MCF 10A (cell line): ENCODE measurements at regions of chr3 and their contacts with region 1.

Region 1: DNA sequence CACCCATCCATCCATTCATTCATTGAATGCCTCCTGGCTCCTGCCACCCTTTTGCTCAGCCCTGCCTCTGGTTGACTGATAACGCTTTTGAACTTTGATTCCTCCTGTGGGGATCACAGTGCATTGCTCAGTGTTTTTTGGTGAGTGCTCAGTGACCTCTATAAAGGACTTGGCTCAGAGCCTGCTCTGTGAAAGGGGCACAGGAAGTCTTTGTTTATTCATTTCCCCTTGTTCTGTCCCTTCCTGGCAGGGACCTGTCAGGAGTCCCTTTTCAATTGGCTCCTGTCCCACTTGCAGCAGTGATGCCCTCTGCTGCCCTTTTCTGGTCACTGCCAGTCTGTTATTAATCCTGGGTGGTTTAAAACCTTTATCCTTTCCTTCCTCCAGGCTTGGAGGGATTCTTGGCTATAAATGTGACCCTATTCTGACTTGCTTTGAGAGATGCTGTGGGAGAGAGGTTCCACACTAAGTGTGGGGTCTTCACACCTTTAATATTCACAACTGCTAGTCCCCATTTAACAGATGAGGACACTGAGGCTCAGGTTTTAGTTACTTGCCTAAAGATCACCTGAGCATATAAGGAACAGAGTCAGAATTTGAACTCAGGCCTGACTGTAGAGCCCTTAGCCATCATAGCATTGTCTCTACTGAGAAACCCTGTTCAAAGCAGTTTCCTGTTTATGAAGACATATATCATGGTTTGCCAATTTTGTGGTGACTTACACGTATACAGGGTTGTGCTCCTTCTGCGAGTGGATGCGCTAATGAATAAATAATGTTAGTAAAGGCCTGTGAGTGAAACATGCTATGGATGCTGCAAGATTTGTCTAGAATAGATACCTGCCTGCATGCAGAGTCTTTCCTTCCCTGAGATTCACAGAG is 23.2 kb upstream of the TATDN2 start:
- DNase-seq: peak; percentile 88
- H3K4me3 Mint-ChIP-seq: no peak overlapping the region
- H3K27ac Mint-ChIP-seq: no peak overlapping the region
- H3K4me1 Mint-ChIP-seq: peaks cover 21% of the 10 kb centered on the region
- H3K27me3 Mint-ChIP-seq: no peaks in the 10 kb centered on the region
- CTCF ChIP-seq: peak; percentile 78

Region 2: DNA sequence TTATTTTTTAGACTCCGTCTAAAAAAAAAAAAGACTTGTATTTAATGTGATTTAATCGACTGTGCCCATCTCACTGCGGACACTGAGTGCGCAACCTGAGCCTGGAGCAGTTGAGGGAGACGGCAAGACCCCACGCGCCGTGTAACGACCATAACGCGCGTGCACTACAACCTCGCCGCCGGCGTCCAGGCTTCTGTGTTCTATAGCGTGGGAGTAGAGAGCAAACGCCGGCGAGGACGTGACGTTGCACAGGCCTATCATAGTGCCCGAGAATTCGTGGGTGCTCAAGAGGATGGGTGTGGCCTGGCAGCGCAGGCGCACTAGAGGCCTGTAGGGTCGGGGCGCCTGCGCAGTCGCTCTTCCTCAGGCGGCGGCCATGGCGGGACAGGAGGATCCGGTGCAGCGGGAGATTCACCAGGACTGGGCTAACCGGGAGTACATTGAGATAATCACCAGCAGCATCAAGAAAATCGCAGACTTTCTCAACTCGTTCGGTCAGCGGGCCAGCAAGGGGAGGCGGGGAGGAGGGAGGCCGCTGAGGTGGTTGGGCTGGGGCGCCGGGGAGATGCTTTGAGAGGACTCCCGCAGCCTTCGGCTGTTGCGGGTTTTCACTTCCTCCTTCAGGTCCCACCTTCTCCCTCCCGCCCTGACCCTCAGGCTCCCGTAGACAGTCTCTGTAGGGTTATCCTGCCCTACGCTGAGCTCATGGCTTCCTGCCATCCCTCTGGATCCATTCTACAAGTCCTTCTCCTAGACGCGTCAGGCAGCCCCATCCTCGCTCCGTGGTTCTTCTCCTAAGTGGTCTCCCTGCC is 109.5 kb before region 1 on chr3 and contains the start of gene BRK1:
- CTCF ChIA-PET with region 1: no interaction called
- POLR2A ChIA-PET with region 1: interaction called, 4 read pairs
- intact Hi-C with region 1: loop called (anchors 1 kb)
- DNase-seq: peak; percentile 97
- H3K4me3 Mint-ChIP-seq: peak within 1 kb of the TSS; percentile 94
- H3K27ac Mint-ChIP-seq: peak within 1 kb of the TSS; percentile 94
- H3K4me1 Mint-ChIP-seq: peaks cover 7% of the 10 kb centered on the region
- H3K27me3 Mint-ChIP-seq: no peaks in the 10 kb centered on the region
- CTCF ChIP-seq: no peak
- total RNA-seq, gene BRK1: 78.5 and 82.5 TPM in 2 replicates

Region 3: GRCh38 chr3:10142707-10143566 is 82.1 kb before region 1 on chr3:
- CTCF ChIA-PET with region 1: interaction called, 3 read pairs
- POLR2A ChIA-PET with region 1: interaction called, 4 read pairs
- intact Hi-C with region 1: loop called (anchors 2 kb)
- DNase-seq: peak; percentile 38
- H3K4me3 Mint-ChIP-seq: peak overlapping the region; percentile 86
- H3K27ac Mint-ChIP-seq: peak overlapping the region; percentile 92
- H3K4me1 Mint-ChIP-seq: peaks cover 6% of the 10 kb centered on the region
- H3K27me3 Mint-ChIP-seq: no peaks in the 10 kb centered on the region
- CTCF ChIP-seq: no peak

Region 4: DNA sequence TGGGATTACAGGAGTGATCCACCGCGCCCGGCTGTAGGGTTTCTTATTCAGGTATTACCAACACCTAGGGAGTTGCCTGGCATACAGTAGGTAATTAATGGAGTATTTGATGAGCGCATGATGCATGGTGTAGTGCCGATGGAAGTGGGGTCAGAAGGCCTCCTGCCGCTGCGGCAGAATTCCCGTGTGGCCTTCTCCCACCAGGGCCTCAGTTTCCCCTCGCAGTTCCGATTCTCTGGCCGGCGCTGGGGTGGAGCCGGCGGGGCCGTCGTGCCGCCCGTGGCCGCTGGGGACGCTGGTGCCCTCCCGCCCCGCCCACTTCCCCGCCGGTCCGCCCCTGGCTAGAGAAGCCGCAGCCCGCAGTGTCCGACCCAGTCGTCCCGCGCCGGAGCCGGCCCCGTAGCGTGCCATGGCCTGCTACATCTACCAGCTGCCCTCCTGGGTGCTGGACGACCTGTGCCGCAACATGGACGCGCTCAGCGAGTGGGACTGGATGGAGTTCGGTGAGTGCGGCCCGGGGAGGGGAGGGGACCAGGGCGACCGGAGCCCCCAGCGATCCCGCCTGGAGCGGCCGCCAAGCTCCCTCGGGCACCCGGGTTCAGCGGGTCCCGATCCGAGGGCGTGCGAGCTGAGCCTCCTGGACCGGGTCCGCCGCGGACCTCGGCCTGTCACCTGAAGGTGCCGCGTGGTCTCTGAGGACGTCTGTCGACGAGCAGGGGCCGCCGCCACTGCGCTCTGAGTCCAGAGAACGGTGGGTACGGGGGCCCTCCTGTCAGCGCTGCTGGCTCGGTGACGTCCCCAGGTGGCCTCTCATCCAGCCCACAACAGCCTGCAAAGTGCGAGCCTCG is 60.3 kb before region 1 on chr3 and contains the start of gene IRAK2:
- CTCF ChIA-PET with region 1: interaction called, 4 read pairs
- POLR2A ChIA-PET with region 1: no interaction called
- intact Hi-C with region 1: loop called (anchors 1 kb)
- DNase-seq: peak; percentile 58
- H3K4me3 Mint-ChIP-seq: peak within 1 kb of the TSS; percentile 69
- H3K27ac Mint-ChIP-seq: no peak within 1 kb of the TSS
- H3K4me1 Mint-ChIP-seq: no peaks in the 10 kb centered on the region
- H3K27me3 Mint-ChIP-seq: no peaks in the 10 kb centered on the region
- CTCF ChIP-seq: peak; percentile 91
- total RNA-seq, gene IRAK2: 6.0 and 7.0 TPM in 2 replicates

Region 5: GRCh38 chr3:10192953-10193691 is 31.9 kb before region 1 on chr3:
- CTCF ChIA-PET with region 1: interaction called, 12 read pairs
- POLR2A ChIA-PET with region 1: interaction called, 6 read pairs
- intact Hi-C with region 1: loop called (anchors 1 kb)
- DNase-seq: peak; percentile 90
- H3K4me3 Mint-ChIP-seq: peak overlapping the region; percentile 12
- H3K27ac Mint-ChIP-seq: peak overlapping the region; percentile 69
- H3K4me1 Mint-ChIP-seq: peaks cover 47% of the 10 kb centered on the region
- H3K27me3 Mint-ChIP-seq: no peaks in the 10 kb centered on the region
- CTCF ChIP-seq: peak; percentile 51

Region 6: DNA sequence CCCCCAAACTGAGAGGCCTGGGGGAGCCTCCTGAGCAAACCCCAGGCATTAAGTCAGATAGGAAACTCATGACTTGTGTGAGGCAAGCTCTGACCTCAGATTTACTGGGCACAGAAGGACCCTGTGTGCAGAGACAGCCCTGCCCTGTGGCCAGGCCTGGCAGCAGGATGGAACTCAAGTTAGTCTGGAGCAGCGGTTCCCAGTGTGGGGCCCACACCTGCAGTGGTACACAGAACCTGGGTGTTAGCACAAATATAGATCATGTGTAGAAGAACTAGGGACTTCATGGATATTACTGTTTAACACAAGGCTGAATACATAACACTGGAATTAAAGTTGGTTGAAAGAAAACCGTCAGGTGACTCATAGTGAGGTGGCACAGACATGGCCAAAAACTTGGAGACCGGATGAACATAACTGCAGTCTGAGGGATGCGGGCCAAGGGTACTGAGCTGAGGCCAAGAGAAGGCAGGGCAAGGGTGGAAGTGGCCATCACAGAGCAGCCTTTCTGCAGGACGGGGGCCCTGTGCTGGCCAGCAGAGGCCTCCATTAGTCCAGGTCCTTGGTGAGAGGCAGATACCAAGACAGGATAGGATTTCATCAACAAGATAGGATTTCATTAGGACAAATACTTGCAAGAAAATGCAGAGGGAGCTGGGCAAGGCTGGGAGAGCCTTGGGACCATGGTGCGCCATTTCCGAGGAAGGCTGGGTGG is 19.4 kb before region 1 on chr3:
- CTCF ChIA-PET with region 1: interaction called, 19 read pairs
- POLR2A ChIA-PET with region 1: no interaction called
- intact Hi-C with region 1: no loop called
- DNase-seq: peak; percentile 96
- H3K4me3 Mint-ChIP-seq: peak overlapping the region; percentile 46
- H3K27ac Mint-ChIP-seq: peak overlapping the region; percentile 77
- H3K4me1 Mint-ChIP-seq: peaks cover 8% of the 10 kb centered on the region
- H3K27me3 Mint-ChIP-seq: no peaks in the 10 kb centered on the region
- CTCF ChIP-seq: no peak